Sciatic nerve (tissue), 2 donors: ENCODE measurements at regions of chr21 and their contacts with region 1.

Region 1: GRCh38 chr21:21290751-21291150 is 292.5 kb downstream of the NCAM2 start:
- DNase-seq: no peak
- ATAC-seq: no peak

Region 2: DNA sequence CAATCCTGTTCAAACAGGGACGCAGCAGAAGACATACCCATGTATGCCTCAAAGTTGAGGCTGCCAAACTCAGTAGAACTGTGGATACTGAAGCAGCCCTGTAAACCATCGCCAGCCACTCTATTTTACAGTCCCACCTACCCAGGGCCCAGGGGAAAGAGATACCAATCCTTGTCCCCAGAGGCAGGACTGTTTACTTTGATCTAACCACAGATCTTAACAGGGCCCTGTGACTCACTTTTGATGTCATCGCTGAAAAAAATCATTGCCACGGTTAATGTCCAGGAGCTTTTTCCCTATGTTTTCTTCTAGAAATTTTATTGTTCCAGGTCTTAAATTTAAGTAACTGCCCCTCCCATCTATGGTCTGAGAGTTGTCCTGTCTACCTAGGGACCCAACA is 830.9 kb before region 1 on chr21:
- intact Hi-C with region 1: no loop called
- DNase-seq: no peak
- ATAC-seq: no peak

Region 3: DNA sequence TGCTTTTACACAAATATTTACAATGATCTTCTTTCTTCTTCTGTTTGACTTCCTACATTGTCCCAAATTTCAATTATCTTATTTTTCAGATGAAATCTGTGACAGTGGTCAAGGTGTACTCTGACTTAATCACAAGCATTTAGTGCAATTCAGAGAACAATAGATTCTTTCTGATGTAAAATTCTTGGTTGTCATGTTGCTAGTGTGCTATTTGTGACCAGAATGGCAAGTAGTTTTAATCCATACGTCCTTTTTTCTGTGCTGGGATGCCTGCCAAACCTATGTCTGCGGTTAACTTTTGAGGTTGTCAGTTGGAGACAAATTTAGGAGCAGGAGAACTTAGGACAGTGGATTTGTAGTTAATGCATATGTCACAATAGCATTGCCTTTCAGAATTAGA is 261.6 kb before region 1 on chr21:
- intact Hi-C with region 1: no loop called
- DNase-seq: no peak
- ATAC-seq: no peak

Region 4: DNA sequence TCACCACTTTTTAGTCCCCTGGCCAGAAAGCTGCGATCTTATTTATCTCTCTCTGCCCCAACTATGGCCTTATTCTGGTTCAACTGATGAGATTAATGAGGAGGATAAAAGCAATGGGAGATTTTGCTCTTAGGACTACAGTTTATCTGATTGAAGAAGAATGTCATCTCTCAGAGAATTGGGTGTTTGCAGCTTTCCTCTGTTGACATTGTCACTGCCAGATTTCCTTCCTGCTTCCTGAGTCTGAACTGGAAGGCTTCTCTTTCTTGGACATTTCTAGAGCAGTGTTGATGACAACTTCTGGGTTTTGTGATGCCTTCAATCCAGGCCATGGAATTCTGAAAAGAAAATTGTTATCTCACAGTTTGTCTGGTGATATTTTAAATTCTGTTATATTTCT is 24.6 kb after region 1 on chr21:
- intact Hi-C with region 1: loop called (anchors 1 kb)
- DNase-seq: no peak
- ATAC-seq: no peak

Region 5: DNA sequence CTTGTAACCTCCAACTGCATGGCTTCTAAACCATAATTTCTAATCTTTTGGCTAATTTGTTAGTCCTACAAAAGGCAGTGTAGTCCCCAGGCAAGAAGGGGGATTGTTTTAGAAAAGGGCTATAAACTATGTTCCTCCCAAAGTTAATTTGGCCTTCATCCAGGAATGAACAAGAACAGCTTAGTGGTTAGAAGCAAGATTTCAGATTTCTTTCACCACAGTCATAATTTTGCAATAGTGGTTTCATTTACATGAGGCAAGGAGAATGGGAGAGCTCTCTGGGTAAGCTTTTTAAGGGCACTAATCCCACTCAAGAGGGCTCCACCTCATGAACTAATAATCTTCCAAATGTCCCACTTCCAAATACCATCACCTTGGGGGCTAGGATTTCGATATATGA is 1061.3 kb after region 1 on chr21:
- intact Hi-C with region 1: no loop called
- DNase-seq: no peak
- ATAC-seq: no peak